RWPE1 (cell line): ENCODE measurements at regions of chr11 and their contacts with region 1.

Region 1: DNA sequence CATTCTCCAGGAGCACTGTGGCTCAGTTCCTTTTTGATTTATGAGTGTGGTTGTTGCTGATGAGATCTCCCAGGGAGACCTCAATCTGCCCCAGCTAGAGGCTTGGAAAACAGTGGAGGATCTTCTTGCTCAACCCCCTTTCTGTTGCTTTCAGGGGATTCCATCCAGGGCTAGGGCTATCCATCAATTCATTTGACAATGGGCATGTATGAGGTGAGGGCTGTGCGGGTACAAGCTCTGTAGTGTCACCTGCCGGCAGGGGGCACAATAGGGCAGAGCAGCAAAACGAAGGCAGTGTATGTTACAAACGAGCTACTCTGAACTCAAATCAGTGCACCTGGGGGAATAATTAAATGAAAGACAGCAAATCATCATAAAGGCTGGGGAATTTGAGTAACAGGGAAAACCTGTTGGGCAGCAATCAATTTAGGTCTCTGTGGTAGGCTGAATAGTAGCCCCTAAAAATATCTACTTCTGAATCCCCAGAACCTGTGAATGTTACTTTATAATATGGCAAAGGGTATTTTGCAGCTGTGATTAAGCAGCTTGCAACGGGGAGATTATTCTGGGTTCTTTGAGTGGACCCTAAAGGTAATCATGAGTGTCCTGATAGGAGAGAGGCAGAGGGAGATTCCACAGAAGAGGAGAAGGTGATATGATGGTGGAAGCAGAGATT is 170.3 kb upstream of the ZBED5 start:
- DNase-seq: peak; percentile 52
- H3K27ac ChIP-seq: no peak overlapping the region
- CTCF ChIP-seq: peak; percentile 83

Region 2: DNA sequence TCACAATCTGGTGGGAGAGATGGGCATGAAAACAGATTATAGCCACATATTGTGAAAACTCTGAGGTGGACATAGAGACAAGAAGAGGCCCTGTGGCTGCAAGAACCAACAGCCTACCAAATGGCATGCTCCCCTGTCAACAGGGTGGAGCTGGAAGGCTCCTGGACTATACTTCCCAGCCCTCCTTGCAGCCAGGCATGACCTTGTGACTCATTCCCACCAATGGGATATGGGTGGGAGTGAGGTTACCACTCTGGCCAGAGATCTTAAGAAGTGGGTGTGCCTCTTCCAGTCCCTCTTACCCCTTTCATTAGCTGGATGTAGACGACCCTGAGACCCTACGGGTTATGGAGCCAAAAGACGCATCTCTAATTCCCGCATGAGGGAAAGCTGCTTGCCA is 43.9 kb before region 1 on chr11:
- CTCF ChIA-PET with region 1: interaction called, 10 read pairs
- POLR2A ChIA-PET with region 1: no interaction called
- DNase-seq: no peak
- H3K27ac ChIP-seq: no peak overlapping the region
- CTCF ChIP-seq: no peak

Region 3: GRCh38 chr11:11332141-11332710 is 304.1 kb after region 1 on chr11:
- CTCF ChIA-PET with region 1: no interaction called
- POLR2A ChIA-PET with region 1: no interaction called
- DNase-seq: no peak
- H3K27ac ChIP-seq: no peak overlapping the region
- CTCF ChIP-seq: no peak

Region 4: GRCh38 chr11:11787305-11788062 is 759.3 kb after region 1 on chr11:
- CTCF ChIA-PET with region 1: interaction called, 25 read pairs
- POLR2A ChIA-PET with region 1: no interaction called
- DNase-seq: peak; percentile 72
- H3K27ac ChIP-seq: no peak overlapping the region
- CTCF ChIP-seq: peak; percentile 77